Mammary epithelial cell (primary cell): ENCODE measurements at regions of chr1 and their contacts with region 1.

Region 1: DNA sequence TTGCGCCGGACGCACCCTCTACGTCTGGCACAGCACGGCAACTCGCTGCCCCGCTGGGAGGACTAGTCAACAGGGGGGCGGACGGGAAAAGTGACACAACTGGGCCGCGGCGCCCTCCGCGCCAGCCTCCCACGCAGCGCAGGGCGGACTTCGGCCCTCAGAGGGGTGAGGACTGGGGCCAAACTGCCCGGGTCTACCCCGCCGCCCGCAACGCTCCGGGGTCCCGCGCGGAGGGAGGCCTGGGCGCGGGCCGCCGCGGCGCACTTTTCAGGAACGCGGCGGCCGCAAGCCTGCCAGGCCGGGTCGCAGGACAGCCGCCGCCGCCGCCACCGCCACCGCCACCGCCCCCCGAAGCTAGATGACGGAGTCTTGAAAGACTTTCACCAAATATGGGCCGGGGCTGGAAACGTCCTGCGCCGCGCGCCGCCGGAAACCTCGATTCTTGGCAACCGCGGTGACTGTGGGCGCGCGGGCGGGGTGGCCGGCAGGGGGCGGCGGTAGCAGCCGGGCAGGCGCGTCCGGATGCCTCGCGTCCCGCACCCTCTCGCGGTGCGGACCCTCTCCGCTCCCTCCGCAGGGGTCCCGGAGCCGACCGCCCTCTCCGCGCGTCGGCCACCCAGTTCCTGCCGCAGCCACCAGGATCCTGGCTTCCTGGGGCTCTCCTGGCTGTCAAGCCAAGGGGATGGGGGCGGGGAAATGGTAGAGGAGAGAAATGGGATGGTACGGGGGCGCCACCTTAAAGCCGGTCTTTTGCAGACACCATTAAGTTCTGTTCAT is 3.7 kb upstream of the CCN1 start:
- DNase-seq: peak; percentile 62
- H3K4me3 ChIP-seq: peak overlapping the region; percentile 61 to 76 (median 64)
- H3K27ac ChIP-seq: peak overlapping the region; percentile 62
- H3K4me1 ChIP-seq: peaks cover 52% of the 10 kb centered on the region
- H3K27me3 ChIP-seq: no peaks in the 10 kb centered on the region
- CTCF ChIP-seq: peak; percentile 42 to 64

Region 2: DNA sequence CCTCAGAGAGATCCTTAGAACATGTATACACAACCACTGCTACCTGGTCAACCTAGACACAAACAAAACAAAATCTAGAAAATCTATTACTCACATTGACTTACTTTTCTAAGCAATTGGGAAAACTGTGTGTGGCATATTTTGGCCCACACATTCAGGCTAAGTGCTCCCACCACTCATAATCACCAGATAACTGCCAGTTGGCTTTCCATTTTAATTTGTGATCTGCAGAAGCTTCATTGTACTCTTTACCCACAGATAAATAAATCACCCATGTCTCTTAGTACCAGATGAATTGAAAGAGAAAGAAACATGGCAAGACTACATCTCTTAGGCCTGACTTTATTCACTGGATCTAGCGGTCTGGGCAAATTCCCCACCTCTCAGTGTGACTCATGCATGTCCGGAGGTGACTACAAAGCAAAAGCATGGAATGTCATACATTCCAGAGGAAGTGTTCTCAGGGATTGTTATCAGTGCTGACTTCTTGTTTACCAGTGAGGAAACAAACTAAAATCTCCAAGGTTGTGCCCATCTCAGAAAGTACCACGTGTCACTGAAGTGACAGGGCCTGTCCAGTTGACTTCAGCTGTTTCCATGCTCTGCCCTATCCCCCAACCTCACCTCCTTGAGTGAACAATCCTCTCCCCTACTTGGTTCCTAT is 248.0 kb before region 1 on chr1:
- CTCF ChIA-PET with region 1: no interaction called
- dilution Hi-C with region 1: loop called (anchors 25 kb)
- in situ Hi-C with region 1: loop called in 1 of 2 experiments (anchors 25 kb)
- intact Hi-C with region 1: loop called (anchors 5 kb)
- DNase-seq: peak; percentile 89
- H3K4me3 ChIP-seq: no peak overlapping the region
- H3K27ac ChIP-seq: peak overlapping the region; percentile 87
- H3K4me1 ChIP-seq: peaks cover 51% of the 10 kb centered on the region
- H3K27me3 ChIP-seq: no peaks in the 10 kb centered on the region
- CTCF ChIP-seq: no peak

Region 3: GRCh38 chr1:85484264-85484663 is 92.6 kb before region 1 on chr1:
- CTCF ChIA-PET with region 1: no interaction called
- dilution Hi-C with region 1: loop called (anchors 5 kb)
- in situ Hi-C with region 1: no loop called
- intact Hi-C with region 1: no loop called
- DNase-seq: no peak
- H3K4me3 ChIP-seq: no peak overlapping the region
- H3K27ac ChIP-seq: no peak overlapping the region
- H3K4me1 ChIP-seq: no peaks in the 10 kb centered on the region
- H3K27me3 ChIP-seq: no peaks in the 10 kb centered on the region
- CTCF ChIP-seq: no peak

Region 4: GRCh38 chr1:85650645-85651044 is 73.8 kb after region 1 on chr1:
- CTCF ChIA-PET with region 1: no interaction called
- dilution Hi-C with region 1: no loop called
- in situ Hi-C with region 1: no loop called
- intact Hi-C with region 1: no loop called
- DNase-seq: no peak
- H3K4me3 ChIP-seq: no peak overlapping the region
- H3K27ac ChIP-seq: no peak overlapping the region
- H3K4me1 ChIP-seq: peaks cover 6% of the 10 kb centered on the region
- H3K27me3 ChIP-seq: no peaks in the 10 kb centered on the region
- CTCF ChIP-seq: no peak